CD8-positive, alpha-beta T cell (primary cell): ENCODE measurements at regions of chr19 and their contacts with region 1.

Region 1: GRCh38 chr19:43595999-43596841 is at the starts of genes IRGQ and ZNF576:
- DNase-seq: peak; percentile 99 to 100 (median 100)
- ATAC-seq: peak; percentile 75
- H3K4me3 ChIP-seq: peak within 1 kb of the TSS; percentile 91 to 100
- H3K4me3 Mint-ChIP-seq: peak within 1 kb of the TSS; percentile 94
- H3K27ac ChIP-seq: peak within 1 kb of the TSS; percentile 96 to 100
- H3K27ac Mint-ChIP-seq: peak within 1 kb of the TSS; percentile 100
- H3K4me1 ChIP-seq: peaks cover 33% of the 10 kb centered on the region
- H3K4me1 Mint-ChIP-seq: peaks cover 30% of the 10 kb centered on the region
- H3K27me3 ChIP-seq: no peaks in the 10 kb centered on the region
- H3K27me3 Mint-ChIP-seq: no peaks in the 10 kb centered on the region
- CTCF ChIP-seq: no peak
- total RNA-seq, gene IRGQ: 25.5 to 26.5 TPM
- total RNA-seq, gene ZNF576: 4.9 to 5.2 TPM

Region 2: GRCh38 chr19:43430142-43430710 is 166.0 kb before region 1 on chr19:
- CTCF ChIA-PET with region 1: interaction called, 6 read pairs
- POLR2A ChIA-PET with region 1: no interaction called
- intact Hi-C with region 1: loop called in 1 of 2 experiments (anchors 1 kb)
- DNase-seq: peak in 1 of 9 experiments; percentile 48
- ATAC-seq: no peak
- H3K4me3 ChIP-seq: no peak overlapping the region
- H3K4me3 Mint-ChIP-seq: no peak overlapping the region
- H3K27ac ChIP-seq: no peak overlapping the region
- H3K27ac Mint-ChIP-seq: no peak overlapping the region
- H3K4me1 ChIP-seq: peaks cover 7% of the 10 kb centered on the region
- H3K4me1 Mint-ChIP-seq: peaks cover 18% of the 10 kb centered on the region
- H3K27me3 ChIP-seq: no peaks in the 10 kb centered on the region
- H3K27me3 Mint-ChIP-seq: no peaks in the 10 kb centered on the region
- CTCF ChIP-seq: no peak

Region 3: GRCh38 chr19:43519436-43520088 is 76.7 kb before region 1 on chr19:
- CTCF ChIA-PET with region 1: interaction called, 22 read pairs
- POLR2A ChIA-PET with region 1: interaction called, 5 read pairs
- intact Hi-C with region 1: no loop called
- DNase-seq: peak; percentile 57 to 88 (median 82)
- ATAC-seq: peak; percentile 95
- H3K4me3 ChIP-seq: no peak overlapping the region
- H3K4me3 Mint-ChIP-seq: no peak overlapping the region
- H3K27ac ChIP-seq: no peak overlapping the region
- H3K27ac Mint-ChIP-seq: no peak overlapping the region
- H3K4me1 ChIP-seq: peaks cover 10% of the 10 kb centered on the region
- H3K4me1 Mint-ChIP-seq: peaks cover 13% of the 10 kb centered on the region
- H3K27me3 ChIP-seq: no peaks in the 10 kb centered on the region
- H3K27me3 Mint-ChIP-seq: no peaks in the 10 kb centered on the region
- CTCF ChIP-seq: peak; percentile 87

Region 4: DNA sequence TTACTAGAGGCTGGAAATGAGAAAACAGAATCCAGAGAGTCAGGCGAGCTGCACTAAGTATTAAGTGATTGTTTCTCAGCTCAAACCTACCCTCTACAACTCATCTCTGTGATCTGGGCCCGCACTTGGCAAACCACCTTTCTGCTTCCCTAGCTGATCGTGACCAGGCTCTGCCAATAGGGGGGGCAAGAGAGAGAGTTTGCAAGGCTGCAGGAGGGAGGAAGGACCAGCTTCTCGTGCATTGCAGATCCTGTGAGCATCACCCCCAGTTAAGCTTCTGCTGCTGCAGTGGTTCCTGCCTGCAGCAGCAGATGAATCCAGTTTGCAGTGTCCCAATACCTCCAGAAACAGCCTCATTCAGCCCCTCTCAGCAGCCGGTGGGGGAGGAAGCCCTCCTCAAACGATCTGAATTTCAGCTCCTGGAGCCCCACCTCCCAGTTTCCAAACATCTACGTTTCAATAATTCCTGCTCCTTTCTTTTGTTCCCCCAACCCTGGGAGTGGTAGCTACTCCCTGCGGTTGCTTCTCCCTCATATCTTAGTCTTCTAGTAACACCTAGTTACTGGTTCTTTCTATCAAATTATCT is 40.9 kb before region 1 on chr19:
- CTCF ChIA-PET with region 1: interaction called, 190 read pairs
- POLR2A ChIA-PET with region 1: interaction called, 21 read pairs
- intact Hi-C with region 1: loop called (anchors 1 kb)
- DNase-seq: peak; percentile 71 to 90 (median 86)
- ATAC-seq: peak; percentile 100
- H3K4me3 ChIP-seq: no peak overlapping the region
- H3K4me3 Mint-ChIP-seq: no peak overlapping the region
- H3K27ac ChIP-seq: no peak overlapping the region
- H3K27ac Mint-ChIP-seq: no peak overlapping the region
- H3K4me1 ChIP-seq: peaks cover 7% of the 10 kb centered on the region
- H3K4me1 Mint-ChIP-seq: peaks cover 17% of the 10 kb centered on the region
- H3K27me3 ChIP-seq: no peaks in the 10 kb centered on the region
- H3K27me3 Mint-ChIP-seq: no peaks in the 10 kb centered on the region
- CTCF ChIP-seq: peak; percentile 79

Region 5: DNA sequence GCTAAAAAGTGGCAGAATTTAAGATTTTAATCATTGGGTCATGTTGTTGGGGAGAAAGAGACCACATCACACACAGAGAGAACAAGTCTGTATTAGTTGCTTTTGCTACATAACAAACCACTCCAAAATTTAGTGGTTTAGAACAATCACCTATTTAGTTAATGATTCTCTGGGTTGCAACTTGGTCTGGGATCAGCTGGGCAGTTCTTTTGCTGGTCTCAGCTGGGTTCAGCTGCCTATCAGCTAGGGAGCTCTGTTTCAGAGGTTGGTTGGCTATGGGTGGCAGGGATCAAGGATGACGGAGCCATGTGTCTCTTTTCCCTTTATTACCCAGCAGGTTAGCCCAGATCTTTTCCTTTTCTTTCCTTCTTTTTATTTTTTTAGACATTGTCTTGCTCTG is 11.7 kb before region 1 on chr19:
- CTCF ChIA-PET with region 1: interaction called, 19 read pairs
- POLR2A ChIA-PET with region 1: interaction called, 3 read pairs
- intact Hi-C with region 1: no loop called
- DNase-seq: no peak
- ATAC-seq: no peak
- H3K4me3 ChIP-seq: no peak overlapping the region
- H3K4me3 Mint-ChIP-seq: no peak overlapping the region
- H3K27ac ChIP-seq: peak overlapping the region in 1 of 2 experiments; percentile 65
- H3K27ac Mint-ChIP-seq: peak overlapping the region; percentile 69
- H3K4me1 ChIP-seq: peaks cover 17% of the 10 kb centered on the region
- H3K4me1 Mint-ChIP-seq: peaks cover 14% of the 10 kb centered on the region
- H3K27me3 ChIP-seq: no peaks in the 10 kb centered on the region
- H3K27me3 Mint-ChIP-seq: no peaks in the 10 kb centered on the region
- CTCF ChIP-seq: no peak

Region 6: GRCh38 chr19:43612374-43612773 is 16.2 kb after region 1 on chr19:
- CTCF ChIA-PET with region 1: no interaction called
- POLR2A ChIA-PET with region 1: no interaction called
- intact Hi-C with region 1: no loop called
- DNase-seq: no peak
- ATAC-seq: no peak
- H3K4me3 ChIP-seq: no peak overlapping the region
- H3K4me3 Mint-ChIP-seq: no peak overlapping the region
- H3K27ac ChIP-seq: no peak overlapping the region
- H3K27ac Mint-ChIP-seq: no peak overlapping the region
- H3K4me1 ChIP-seq: no peaks in the 10 kb centered on the region
- H3K4me1 Mint-ChIP-seq: peaks cover 43% of the 10 kb centered on the region
- H3K27me3 ChIP-seq: no peaks in the 10 kb centered on the region
- H3K27me3 Mint-ChIP-seq: no peaks in the 10 kb centered on the region
- CTCF ChIP-seq: no peak

Region 7: GRCh38 chr19:43643326-43643725 is 47.1 kb after region 1 on chr19:
- CTCF ChIA-PET with region 1: no interaction called
- POLR2A ChIA-PET with region 1: no interaction called
- intact Hi-C with region 1: no loop called
- DNase-seq: no peak
- ATAC-seq: no peak
- H3K4me3 ChIP-seq: no peak overlapping the region
- H3K4me3 Mint-ChIP-seq: no peak overlapping the region
- H3K27ac ChIP-seq: no peak overlapping the region
- H3K27ac Mint-ChIP-seq: no peak overlapping the region
- H3K4me1 ChIP-seq: peaks cover 11% of the 10 kb centered on the region
- H3K4me1 Mint-ChIP-seq: peaks cover 16% of the 10 kb centered on the region
- H3K27me3 ChIP-seq: peaks cover 9 to 16% of the 10 kb centered on the region in 2 experiments
- H3K27me3 Mint-ChIP-seq: peaks cover 17% of the 10 kb centered on the region
- CTCF ChIP-seq: no peak

Region 8: DNA sequence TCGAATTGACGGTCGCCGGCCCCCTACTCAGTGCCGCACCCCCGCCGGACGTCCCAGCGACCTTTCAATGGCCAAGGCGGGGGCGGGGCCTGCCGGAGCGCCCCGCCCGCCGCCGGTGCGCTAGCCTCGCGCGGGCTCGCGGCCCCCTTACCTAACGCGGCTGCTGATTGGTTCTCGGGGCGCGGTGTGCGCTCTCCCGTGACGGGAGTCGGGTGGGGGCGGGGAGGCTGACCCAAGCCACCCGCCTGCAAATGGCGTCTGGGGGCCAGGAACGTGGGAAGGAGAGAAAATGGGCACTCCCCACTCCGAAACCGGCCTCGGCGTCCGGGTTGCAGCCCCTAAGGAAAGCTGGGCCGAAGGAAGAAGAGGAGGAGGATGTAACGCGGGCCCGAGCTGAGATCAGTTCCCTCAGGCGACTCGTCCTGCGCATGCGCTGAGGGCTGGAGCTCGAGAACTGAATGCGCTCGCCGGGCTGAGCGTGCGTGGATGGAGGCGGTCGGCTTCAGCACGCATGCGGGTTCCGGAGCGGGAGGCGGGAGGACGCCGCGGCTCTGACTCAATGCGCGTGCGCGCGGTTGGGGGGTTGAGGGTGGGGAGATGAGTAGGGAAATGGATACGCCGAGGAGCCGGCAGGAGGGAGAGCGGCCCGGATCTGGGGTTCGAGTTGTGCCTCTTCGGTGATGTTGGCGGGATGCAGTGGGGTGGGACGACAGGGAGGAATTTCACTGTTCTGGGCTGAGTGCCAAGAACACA is 158.5 kb after region 1 on chr19 and contains the start of gene SMG9:
- CTCF ChIA-PET with region 1: no interaction called
- POLR2A ChIA-PET with region 1: no interaction called
- intact Hi-C with region 1: loop called in 1 of 2 experiments (anchors 1 kb)
- DNase-seq: peak; percentile 95 to 99 (median 99)
- ATAC-seq: peak; percentile 80
- H3K4me3 ChIP-seq: peak within 1 kb of the TSS; percentile 71 to 72
- H3K4me3 Mint-ChIP-seq: peak within 1 kb of the TSS; percentile 92
- H3K27ac ChIP-seq: peak within 1 kb of the TSS; percentile 85 to 97
- H3K27ac Mint-ChIP-seq: peak within 1 kb of the TSS; percentile 98
- H3K4me1 ChIP-seq: peaks cover 21% of the 10 kb centered on the region
- H3K4me1 Mint-ChIP-seq: peaks cover 46% of the 10 kb centered on the region
- H3K27me3 ChIP-seq: no peaks in the 10 kb centered on the region
- H3K27me3 Mint-ChIP-seq: no peaks in the 10 kb centered on the region
- CTCF ChIP-seq: no peak
- total RNA-seq, gene SMG9: 32.2 to 34.3 TPM